ENCODE measurements at regions of chr5 and their contacts with region 1.

Region 1: DNA sequence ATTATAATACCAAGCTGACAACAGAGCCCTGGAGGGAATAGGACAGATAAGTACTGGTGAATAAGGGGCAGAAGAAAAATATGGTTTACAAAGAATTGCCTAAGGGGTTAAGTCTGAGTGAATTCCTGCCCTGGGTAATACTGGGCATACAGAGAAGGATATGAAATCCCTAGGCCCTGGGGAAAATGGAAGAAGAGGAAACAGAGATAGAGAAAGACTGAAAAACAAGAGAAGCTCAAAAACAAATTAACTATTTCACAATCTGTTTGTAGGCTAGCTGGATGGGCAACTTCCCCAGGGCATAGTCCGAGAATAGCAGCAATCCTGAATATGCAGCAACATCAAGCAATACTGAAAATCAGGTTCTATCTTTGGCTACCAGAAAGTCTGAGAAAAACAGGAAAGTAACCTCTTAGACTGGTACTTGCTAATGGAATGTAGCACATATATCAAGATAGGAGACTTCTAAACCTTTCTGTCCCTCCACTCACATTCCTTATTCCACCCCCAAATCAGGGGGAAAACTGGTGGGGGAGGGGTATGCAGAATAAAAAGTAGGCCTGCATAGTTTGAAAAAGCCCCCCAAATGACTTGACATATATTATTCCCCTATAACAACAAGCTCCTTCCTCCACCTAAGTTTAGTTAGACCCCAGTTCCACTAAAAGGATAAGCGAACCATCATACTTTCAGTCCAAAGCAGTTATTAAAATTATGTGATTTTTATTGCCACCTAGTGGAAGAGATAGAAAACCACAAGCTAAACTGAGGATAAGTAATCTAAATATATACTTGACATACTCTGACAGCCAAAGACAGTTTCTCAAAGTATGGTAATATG is 20.6 kb downstream of the SLC38A9 start:
- DNase-seq: peak; percentile 41
- ATAC-seq: peak; percentile 49
- H3K4me3 ChIP-seq: no peak overlapping the region
- H3K4me3 Mint-ChIP-seq: no peak overlapping the region
- H3K27ac ChIP-seq: no peak overlapping the region
- H3K27ac Mint-ChIP-seq: no peak overlapping the region
- H3K4me1 ChIP-seq: no peaks in the 10 kb centered on the region
- H3K4me1 Mint-ChIP-seq: peaks cover 5% of the 10 kb centered on the region
- H3K27me3 ChIP-seq: no peaks in the 10 kb centered on the region
- H3K27me3 Mint-ChIP-seq: no peaks in the 10 kb centered on the region
- CTCF ChIP-seq: peak; percentile 85

Region 2: DNA sequence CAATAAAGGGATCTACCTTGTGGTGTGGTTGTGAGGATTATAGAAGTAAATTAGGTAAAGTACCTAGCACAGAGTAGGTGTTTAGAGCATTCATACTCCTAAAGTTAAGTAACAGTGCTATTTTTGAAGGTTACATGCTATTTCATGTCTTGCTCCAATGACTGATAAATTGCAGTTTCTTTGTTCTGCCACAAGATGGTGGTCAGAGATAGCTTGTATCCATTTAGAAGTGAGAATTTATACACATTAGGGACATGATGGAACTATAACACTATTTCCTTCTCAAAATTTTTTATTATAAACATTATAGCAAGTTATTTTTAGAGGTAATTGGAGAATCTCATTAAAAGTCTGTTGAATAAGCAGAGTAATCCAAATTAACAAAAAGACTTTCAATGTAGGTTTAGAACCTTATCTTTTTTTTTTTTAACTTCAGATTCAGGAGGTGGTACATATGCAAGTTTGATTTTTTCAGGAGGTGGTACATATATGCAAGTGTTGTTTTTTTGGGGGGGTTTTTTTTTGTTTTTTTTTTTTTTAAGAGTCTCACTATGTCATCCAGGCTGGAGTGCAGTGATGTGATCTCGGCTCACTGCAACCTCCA is 366.6 kb before region 1 on chr5:
- CTCF ChIA-PET with region 1: interaction called, 10 read pairs
- POLR2A ChIA-PET with region 1: no interaction called
- intact Hi-C with region 1: loop called (anchors 2 kb)
- DNase-seq: peak; percentile 37
- ATAC-seq: peak; percentile 57
- H3K4me3 ChIP-seq: no peak overlapping the region
- H3K4me3 Mint-ChIP-seq: no peak overlapping the region
- H3K27ac ChIP-seq: no peak overlapping the region
- H3K27ac Mint-ChIP-seq: no peak overlapping the region
- H3K4me1 ChIP-seq: no peaks in the 10 kb centered on the region
- H3K4me1 Mint-ChIP-seq: peaks cover 10% of the 10 kb centered on the region
- H3K27me3 ChIP-seq: no peaks in the 10 kb centered on the region
- H3K27me3 Mint-ChIP-seq: no peaks in the 10 kb centered on the region
- CTCF ChIP-seq: peak; percentile 68

Region 3: GRCh38 chr5:55344392-55344992 is 347.0 kb before region 1 on chr5:
- CTCF ChIA-PET with region 1: interaction called, 21 read pairs
- POLR2A ChIA-PET with region 1: no interaction called
- intact Hi-C with region 1: loop called (anchors 1 kb)
- DNase-seq: peak; percentile 67
- ATAC-seq: peak; percentile 47
- H3K4me3 ChIP-seq: no peak overlapping the region
- H3K4me3 Mint-ChIP-seq: no peak overlapping the region
- H3K27ac ChIP-seq: peak overlapping the region in 1 of 2 donors; percentile 52
- H3K27ac Mint-ChIP-seq: no peak overlapping the region
- H3K4me1 ChIP-seq: no peaks in the 10 kb centered on the region
- H3K4me1 Mint-ChIP-seq: no peaks in the 10 kb centered on the region
- H3K27me3 ChIP-seq: no peaks in the 10 kb centered on the region
- H3K27me3 Mint-ChIP-seq: no peaks in the 10 kb centered on the region
- CTCF ChIP-seq: peak; percentile 99

Region 4: DNA sequence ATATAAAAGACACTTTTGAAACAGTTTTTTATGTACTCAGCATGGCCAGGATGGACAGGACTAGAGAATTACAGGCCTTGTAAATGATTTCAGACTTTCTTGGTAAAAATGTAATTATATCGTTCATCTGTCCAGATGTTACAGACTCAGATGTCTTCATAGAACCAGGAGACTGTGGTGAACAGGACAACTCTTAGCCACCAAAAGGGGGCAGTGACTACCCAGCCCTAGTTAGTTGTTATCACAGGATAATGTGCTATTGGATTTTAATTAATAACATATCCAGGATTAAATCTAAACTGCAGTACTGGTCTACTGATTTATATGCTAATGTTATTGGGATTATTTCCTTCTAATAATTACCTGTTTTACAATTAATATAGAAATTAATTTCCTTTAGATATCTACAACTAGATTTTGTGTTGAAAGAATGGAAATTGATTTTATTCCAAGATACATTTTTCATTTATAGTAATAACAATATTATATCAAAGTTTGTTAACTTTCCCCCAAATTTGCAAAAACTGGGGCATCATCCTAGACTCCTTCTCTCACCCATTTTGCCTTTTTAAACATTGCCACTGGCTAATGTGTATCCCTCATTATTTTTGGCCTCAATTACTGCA is 284.3 kb before region 1 on chr5:
- CTCF ChIA-PET with region 1: interaction called, 8 read pairs
- POLR2A ChIA-PET with region 1: no interaction called
- intact Hi-C with region 1: loop called (anchors 1 kb)
- DNase-seq: peak; percentile 22
- ATAC-seq: no peak
- H3K4me3 ChIP-seq: no peak overlapping the region
- H3K4me3 Mint-ChIP-seq: no peak overlapping the region
- H3K27ac ChIP-seq: no peak overlapping the region
- H3K27ac Mint-ChIP-seq: no peak overlapping the region
- H3K4me1 ChIP-seq: no peaks in the 10 kb centered on the region
- H3K4me1 Mint-ChIP-seq: no peaks in the 10 kb centered on the region
- H3K27me3 ChIP-seq: no peaks in the 10 kb centered on the region
- H3K27me3 Mint-ChIP-seq: no peaks in the 10 kb centered on the region
- CTCF ChIP-seq: peak; percentile 47

Region 5: GRCh38 chr5:55706230-55706629 is 14.7 kb after region 1 on chr5:
- CTCF ChIA-PET with region 1: interaction called, 12 read pairs
- POLR2A ChIA-PET with region 1: no interaction called
- intact Hi-C with region 1: no loop called
- DNase-seq: no peak
- ATAC-seq: no peak
- H3K4me3 ChIP-seq: no peak overlapping the region
- H3K4me3 Mint-ChIP-seq: no peak overlapping the region
- H3K27ac ChIP-seq: no peak overlapping the region
- H3K27ac Mint-ChIP-seq: no peak overlapping the region
- H3K4me1 ChIP-seq: peaks cover 9 to 11% of the 10 kb centered on the region in 2 donors
- H3K4me1 Mint-ChIP-seq: peaks cover 15% of the 10 kb centered on the region
- H3K27me3 ChIP-seq: no peaks in the 10 kb centered on the region
- H3K27me3 Mint-ChIP-seq: no peaks in the 10 kb centered on the region
- CTCF ChIP-seq: no peak

Region 6: DNA sequence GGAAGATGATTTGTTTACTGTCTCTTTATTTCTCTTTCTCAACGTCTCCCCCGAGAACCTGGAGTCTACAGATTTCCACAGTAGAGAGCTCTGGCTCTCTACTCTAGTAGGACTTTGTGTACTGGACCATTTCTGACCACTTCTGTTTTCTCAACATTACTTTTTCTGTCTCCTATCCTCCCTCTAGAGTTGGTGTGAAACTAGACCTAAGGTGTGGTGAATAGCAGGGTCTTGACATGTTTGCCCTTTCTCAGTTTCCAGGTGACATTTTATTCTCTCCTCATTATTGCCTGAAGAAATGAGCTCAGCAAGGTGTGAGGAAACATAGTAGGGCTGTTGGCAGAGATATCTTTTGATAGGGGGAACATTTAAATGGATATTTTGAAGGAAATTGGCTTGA is 365.4 kb after region 1 on chr5:
- CTCF ChIA-PET with region 1: no interaction called
- POLR2A ChIA-PET with region 1: no interaction called
- intact Hi-C with region 1: no loop called
- DNase-seq: no peak
- ATAC-seq: no peak
- H3K4me3 ChIP-seq: no peak overlapping the region
- H3K4me3 Mint-ChIP-seq: no peak overlapping the region
- H3K27ac ChIP-seq: no peak overlapping the region
- H3K27ac Mint-ChIP-seq: no peak overlapping the region
- H3K4me1 ChIP-seq: peaks cover 0 to 8% of the 10 kb centered on the region in 2 donors
- H3K4me1 Mint-ChIP-seq: no peaks in the 10 kb centered on the region
- H3K27me3 ChIP-seq: peaks cover 0 to 4% (median 0%) of the 10 kb centered on the region in 4 experiments
- H3K27me3 Mint-ChIP-seq: peaks cover 38% of the 10 kb centered on the region
- CTCF ChIP-seq: no peak

Measured in B cell (primary cell).